Activated CD4-positive, alpha-beta memory T cell treated with anti-CD3 and anti-CD28 coated beads for 36 hours (primary cell): ENCODE measurements at regions of chr11 and their contacts with region 1.

Region 1: DNA sequence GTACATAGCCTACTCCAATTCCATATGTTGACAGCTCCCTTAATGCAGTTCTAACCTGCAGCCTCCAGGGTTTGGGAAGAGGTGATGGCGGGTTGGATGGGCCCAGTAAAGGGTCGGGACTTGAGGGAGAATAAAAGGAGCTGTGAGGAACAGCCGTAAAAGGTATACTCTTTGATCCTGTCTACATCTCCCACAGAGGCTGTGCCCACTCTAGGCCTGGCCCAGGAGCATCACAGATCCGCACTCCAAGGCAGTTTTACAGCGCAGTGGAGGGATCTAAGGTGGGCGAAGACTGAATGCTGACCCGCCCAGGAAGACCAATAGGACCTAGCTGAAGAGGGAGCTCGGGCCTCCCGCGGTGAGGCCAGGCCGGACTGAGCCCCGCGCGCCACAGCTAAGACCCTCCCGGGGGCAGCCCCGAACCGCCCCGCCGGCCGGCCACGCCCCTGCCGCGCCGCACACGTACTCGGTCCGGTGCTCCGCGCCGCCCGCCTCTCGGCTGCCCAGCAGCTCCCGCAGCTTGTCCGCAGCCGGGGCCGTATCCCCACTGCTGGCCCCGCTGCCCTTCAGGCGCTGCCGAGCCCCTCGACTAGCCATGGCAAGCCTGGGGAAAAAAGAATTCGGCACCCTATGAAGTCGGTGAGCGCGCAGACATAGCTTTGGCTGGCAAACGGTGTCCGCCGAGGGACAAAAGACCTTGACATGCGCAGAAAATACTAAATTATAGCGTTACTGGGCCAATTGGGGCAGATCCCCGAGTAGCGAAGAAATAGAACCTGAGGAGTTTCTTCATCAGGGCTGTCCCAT is at the start of gene ALG9:
- DNase-seq: peak; percentile 92
- H3K4me3 Mint-ChIP-seq: peak within 1 kb of the TSS; percentile 92
- H3K27ac Mint-ChIP-seq: peak within 1 kb of the TSS; percentile 86
- H3K4me1 Mint-ChIP-seq: peaks cover 24% of the 10 kb centered on the region
- H3K27me3 Mint-ChIP-seq: no peaks in the 10 kb centered on the region
- total RNA-seq, gene ALG9: 23.6 to 26.7 TPM

Region 2: GRCh38 chr11:112226062-112226830 is 355.2 kb after region 1 on chr11 and contains the start of gene PTS:
- CTCF ChIA-PET with region 1: no interaction called
- POLR2A ChIA-PET with region 1: no interaction called
- intact Hi-C with region 1: loop called (anchors 5 kb)
- DNase-seq: peak; percentile 90
- H3K4me3 Mint-ChIP-seq: peak within 1 kb of the TSS; percentile 86
- H3K27ac Mint-ChIP-seq: peak within 1 kb of the TSS; percentile 92
- H3K4me1 Mint-ChIP-seq: peaks cover 21% of the 10 kb centered on the region
- H3K27me3 Mint-ChIP-seq: no peaks in the 10 kb centered on the region
- total RNA-seq, gene PTS: 28.1 to 28.5 TPM